Activated naive CD4-positive, alpha-beta T cell treated with anti-CD3 and anti-CD28 coated beads, Interleukin-2, amount 10 ng/mL, durations not matched to agents 7 days and 5 days (primary cell): ENCODE measurements at regions of chr12 and their contacts with region 1.

Region 1: GRCh38 chr12:48988030-48988649 is 10.0 kb downstream of the WNT1 start:
- DNase-seq: peak; percentile 84
- H3K4me3 Mint-ChIP-seq: no peak overlapping the region
- H3K27ac Mint-ChIP-seq: no peak overlapping the region
- H3K4me1 Mint-ChIP-seq: peaks cover 9% of the 10 kb centered on the region
- H3K27me3 Mint-ChIP-seq: peaks cover 95% of the 10 kb centered on the region

Region 2: GRCh38 chr12:48936379-48936979 is 51.7 kb before region 1 on chr12:
- CTCF ChIA-PET with region 1: interaction called, 18 read pairs
- DNase-seq: peak; percentile 88
- H3K4me3 Mint-ChIP-seq: no peak overlapping the region
- H3K27ac Mint-ChIP-seq: no peak overlapping the region
- H3K4me1 Mint-ChIP-seq: peaks cover 11% of the 10 kb centered on the region
- H3K27me3 Mint-ChIP-seq: no peaks in the 10 kb centered on the region

Region 3: DNA sequence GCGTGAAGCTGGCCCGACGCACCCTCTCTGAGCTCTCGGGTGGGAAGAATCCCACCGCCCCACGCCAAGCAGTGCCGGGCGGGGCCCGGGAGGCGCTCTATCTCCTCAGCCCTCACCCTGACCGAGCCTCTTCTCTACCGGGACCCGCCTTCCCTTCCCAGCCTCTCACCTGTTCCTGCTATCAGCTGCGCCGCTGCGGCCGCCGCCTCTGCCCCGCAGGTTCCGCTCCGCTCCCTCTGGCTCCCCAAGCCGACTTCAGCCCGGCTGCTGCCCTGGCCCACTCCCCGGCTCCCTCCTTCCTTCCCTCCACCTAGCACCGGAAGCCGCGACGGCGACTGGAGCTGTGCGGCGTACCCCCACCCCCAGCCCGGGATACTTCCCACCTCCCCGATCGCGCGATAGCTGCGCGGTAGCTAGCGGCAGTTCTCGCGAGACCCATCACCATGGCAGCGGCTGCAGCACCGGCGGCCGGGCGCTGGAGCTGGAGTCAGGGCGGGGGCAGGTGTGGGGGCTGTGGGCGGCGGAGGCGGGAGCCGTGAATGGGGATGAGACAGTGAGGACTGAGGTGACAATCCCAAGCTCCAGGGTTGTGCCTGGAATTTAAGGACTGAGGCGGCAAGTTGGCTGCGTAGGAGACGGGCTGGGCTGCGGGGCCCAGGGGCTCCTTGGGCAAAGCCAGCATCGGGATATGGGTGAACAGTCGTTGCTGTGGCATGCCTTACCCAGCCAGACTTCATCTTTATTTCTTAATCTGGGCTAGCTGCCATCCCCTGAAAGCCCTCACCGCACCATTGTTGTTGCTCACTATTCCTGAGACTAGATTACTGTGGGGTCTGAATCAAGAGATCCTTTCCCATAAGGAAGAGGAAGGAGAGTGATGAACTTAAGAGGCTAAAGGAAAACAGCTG is 30.7 kb before region 1 on chr12 and contains the start of gene ARF3:
- CTCF ChIA-PET with region 1: interaction called, 13 read pairs
- DNase-seq: peak; percentile 97
- H3K4me3 Mint-ChIP-seq: peak within 1 kb of the TSS; percentile 90
- H3K27ac Mint-ChIP-seq: peak within 1 kb of the TSS; percentile 81
- H3K4me1 Mint-ChIP-seq: peaks cover 37% of the 10 kb centered on the region
- H3K27me3 Mint-ChIP-seq: peaks cover 43% of the 10 kb centered on the region

Region 4: GRCh38 chr12:48969833-48970701 is 18.1 kb before region 1 on chr12:
- CTCF ChIA-PET with region 1: interaction called, 36 read pairs
- DNase-seq: peak; percentile 43
- H3K4me3 Mint-ChIP-seq: no peak overlapping the region
- H3K27ac Mint-ChIP-seq: no peak overlapping the region
- H3K4me1 Mint-ChIP-seq: peaks cover 30% of the 10 kb centered on the region
- H3K27me3 Mint-ChIP-seq: peaks cover 99% of the 10 kb centered on the region

Region 5: DNA sequence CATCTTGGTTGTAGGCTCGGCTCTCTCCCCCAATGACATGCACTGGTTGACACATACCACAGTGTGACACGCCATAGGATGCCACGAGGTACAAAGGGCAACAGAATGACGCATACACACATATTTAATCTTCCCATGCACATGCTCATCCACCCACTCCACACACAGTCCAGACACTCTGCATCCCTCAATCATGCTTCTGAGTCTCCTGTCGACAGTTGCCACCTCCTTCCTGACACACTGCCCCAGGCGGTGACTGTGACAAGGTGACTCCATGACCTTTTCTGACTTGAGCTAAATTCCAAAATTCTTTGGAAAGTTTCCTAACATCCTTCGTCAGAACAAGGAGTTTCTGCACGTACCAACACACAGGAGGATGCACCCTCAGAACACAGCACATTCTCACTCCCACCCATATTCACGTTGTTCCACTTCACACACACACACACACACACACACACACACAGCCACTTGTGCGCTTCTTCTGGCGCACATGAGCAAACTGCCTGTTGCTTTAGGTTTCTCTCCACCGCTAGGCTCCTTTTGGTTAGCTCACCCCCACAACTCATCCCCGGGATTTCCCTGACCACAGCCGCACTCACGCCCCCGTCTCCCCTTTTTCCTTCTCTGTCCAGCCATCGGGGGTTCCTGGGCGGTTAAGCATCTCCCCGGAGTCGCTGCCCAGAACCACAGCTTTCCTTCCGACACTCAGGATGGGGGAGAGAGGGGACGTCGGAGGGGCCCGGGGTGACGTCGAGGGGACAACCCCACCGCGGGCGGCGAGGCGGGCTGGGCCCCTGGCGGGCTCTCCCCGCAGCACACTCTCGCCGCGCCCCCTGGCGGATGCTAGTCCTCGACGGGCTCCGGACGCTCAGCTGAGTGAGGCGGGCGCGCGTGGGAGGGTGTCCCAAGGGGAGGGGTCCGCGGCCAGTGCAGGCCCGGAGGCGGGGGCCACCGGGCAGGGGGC is 10.5 kb before region 1 on chr12:
- CTCF ChIA-PET with region 1: interaction called, 121 read pairs
- DNase-seq: peak; percentile 83
- H3K4me3 Mint-ChIP-seq: peak overlapping the region; percentile 24
- H3K27ac Mint-ChIP-seq: no peak overlapping the region
- H3K4me1 Mint-ChIP-seq: peaks cover 51% of the 10 kb centered on the region
- H3K27me3 Mint-ChIP-seq: peaks cover 100% of the 10 kb centered on the region

Region 6: DNA sequence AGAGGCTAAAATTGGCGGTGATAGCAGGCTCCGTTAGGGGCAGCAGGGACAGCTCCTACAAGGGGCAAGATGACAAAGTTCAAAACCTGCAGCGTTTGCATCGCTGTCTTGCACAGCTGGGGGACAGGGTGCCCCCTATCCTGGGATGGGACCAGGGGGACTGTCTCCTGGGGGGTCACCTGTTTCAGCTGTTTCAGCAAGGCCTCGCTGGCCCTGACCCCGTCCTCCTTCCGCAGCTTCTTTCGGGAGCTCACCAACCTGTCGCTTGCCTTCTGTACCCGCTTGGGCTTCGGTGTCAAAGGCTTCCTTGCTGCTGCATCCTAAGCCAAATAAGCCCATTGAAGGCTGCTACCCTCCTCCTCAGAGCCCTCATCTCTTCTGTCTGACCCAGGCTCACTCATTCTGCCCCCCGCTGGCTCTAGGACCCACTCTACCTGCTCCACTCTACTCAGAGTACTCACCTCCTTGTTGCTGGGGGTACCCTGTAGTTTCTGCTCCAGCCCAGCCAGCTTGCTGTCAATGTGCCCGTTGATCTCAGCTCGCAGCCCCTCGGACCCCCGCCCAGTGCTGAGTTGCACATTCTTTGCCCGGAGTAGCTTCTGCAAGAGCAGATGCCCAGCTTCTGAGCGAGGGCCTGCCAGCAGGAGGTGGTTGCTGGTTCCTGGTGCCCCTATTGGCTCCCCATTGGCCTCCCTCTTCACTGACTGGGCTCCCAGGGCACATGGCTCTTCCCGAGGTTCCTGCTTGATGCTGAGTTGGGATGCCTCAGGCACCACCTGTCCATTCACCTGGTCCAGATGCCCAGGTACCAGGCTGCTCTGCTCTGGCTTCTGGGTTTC is 42.8 kb after region 1 on chr12:
- CTCF ChIA-PET with region 1: no interaction called
- DNase-seq: no peak
- H3K4me3 Mint-ChIP-seq: no peak overlapping the region
- H3K27ac Mint-ChIP-seq: peak overlapping the region; percentile 37
- H3K4me1 Mint-ChIP-seq: peaks cover 4% of the 10 kb centered on the region
- H3K27me3 Mint-ChIP-seq: no peaks in the 10 kb centered on the region